OCI-LY7 (cell line): ENCODE measurements at regions of chr14 and their contacts with region 1.

Region 1: DNA sequence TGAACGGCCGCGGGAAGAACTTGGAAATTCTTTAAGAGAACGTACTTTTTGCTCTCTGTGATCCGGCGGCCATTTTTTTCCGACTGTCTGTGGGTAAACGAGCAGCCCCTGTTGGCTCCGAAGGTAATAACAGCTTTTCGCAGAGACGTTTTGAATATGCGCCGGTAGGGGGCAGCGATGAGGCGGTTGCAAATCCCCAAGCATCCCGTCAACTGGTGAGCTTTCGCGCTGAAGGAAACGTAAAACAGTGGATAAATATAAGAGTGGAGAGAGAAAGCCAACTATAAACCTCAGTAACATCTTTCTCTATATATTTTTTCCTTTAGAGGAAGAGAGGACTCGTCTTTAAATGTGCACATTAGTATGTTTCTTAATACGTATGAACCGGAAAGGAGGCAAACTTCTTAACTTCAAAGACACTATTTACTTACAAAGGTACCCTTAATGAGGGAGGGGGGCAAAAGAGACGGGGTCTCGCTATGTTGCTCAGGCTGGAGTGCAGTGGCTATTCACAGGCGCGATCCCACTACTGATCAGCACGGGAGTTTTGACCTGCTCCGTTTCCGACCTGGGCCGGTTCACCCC is 9.6 kb upstream of the NEMF start:
- DNase-seq: peak; percentile 89
- H3K4me3 ChIP-seq: peak overlapping the region; percentile 75
- H3K27ac ChIP-seq: peak overlapping the region; percentile 83
- H3K4me1 ChIP-seq: peaks cover 52% of the 10 kb centered on the region
- CTCF ChIP-seq: peak; percentile 100

Region 2: DNA sequence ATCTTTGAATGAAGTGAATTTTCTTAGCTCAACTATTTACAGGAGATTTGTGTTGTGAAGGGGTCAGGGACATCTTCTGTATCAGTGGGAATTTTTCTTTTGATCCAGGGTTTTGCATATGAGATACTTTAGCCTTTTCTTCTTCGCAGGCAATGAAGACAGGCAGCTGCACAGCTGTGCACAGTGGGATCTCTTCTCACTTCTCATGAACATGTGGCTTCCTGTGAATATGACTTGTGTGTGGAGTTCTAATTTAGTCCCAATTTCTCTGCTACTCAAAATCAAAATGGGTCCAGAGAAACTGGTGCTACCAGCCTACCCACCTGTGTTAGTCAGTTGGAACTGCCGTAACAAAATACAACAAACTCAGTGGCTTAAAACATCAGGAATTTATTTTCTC is 68.5 kb after region 1 on chr14:
- CTCF ChIA-PET with region 1: no interaction called
- POLR2A ChIA-PET with region 1: no interaction called
- intact Hi-C with region 1: loop called (anchors 2 kb)
- DNase-seq: peak; percentile 68
- H3K4me3 ChIP-seq: no peak overlapping the region
- H3K27ac ChIP-seq: peak overlapping the region; percentile 79
- H3K4me1 ChIP-seq: peaks cover 38% of the 10 kb centered on the region
- CTCF ChIP-seq: no peak

Region 3: GRCh38 chr14:50231475-50232275 is 369.5 kb after region 1 on chr14 and contains the start of gene SOS2:
- CTCF ChIA-PET with region 1: no interaction called
- POLR2A ChIA-PET with region 1: interaction called, 3 read pairs
- intact Hi-C with region 1: loop called (anchors 2 kb)
- DNase-seq: peak; percentile 91
- H3K4me3 ChIP-seq: peak within 1 kb of the TSS; percentile 94
- H3K27ac ChIP-seq: peak within 1 kb of the TSS; percentile 81
- H3K4me1 ChIP-seq: peaks cover 18% of the 10 kb centered on the region
- CTCF ChIP-seq: 0 out of 2 replicates have a peak, but pooled peaks have one; percentile 12
- total RNA-seq, gene SOS2: 13.5 and 16.5 TPM in 2 replicates